A549 (cell line): ENCODE measurements at regions of chr16 and their contacts with region 1.

Region 1: DNA sequence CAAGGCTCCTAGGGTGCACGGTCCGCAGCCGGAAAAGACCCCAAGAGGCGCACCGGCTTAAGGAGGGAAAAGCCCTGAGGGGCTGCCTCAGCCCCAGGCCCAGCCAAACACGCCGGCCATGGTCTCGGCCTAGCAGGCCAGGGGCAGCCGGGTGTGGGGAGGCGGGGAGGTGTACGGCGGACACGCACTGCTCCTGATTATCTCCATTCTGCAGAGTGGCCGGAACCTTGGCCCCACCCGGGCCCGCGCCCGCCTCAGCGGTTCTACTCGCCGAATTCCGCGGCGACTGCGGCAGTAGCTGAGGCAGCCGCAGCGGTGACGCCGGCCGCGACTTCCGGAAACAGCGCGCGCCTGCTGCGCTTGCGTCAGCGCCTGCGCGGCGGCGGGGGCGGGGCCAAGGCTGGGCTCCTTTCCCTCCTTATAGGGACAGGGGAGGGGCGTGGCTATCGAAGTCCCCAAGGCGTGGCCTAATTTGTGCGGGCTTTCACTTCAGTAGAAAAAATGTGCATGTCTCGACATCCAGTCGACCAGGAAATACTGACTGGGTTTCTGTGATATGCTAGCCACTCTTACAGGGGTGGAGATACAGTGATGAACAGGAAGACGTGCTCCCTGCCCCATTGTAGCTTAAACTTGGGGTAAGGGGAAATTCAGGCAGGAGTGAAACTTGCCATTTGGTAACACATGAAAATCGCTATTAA is at the start of gene PARN:
- DNase-seq: peak; percentile 97 to 99
- ATAC-seq: peak; percentile 70 to 72
- H3K4me3 ChIP-seq: peak within 1 kb of the TSS; percentile 79
- H3K27ac ChIP-seq: peak within 1 kb of the TSS; percentile 90 to 97
- H3K4me1 ChIP-seq: peaks cover 35% of the 10 kb centered on the region
- CTCF ChIP-seq: no peak
- EP300 ChIP-seq: no peak
- POLR2A ChIP-seq: peak; percentile 80
- RAD21 ChIP-seq: no peak
- polyA plus RNA-seq, gene PARN: 58.6 and 86.7 TPM in 2 replicates

Region 2: DNA sequence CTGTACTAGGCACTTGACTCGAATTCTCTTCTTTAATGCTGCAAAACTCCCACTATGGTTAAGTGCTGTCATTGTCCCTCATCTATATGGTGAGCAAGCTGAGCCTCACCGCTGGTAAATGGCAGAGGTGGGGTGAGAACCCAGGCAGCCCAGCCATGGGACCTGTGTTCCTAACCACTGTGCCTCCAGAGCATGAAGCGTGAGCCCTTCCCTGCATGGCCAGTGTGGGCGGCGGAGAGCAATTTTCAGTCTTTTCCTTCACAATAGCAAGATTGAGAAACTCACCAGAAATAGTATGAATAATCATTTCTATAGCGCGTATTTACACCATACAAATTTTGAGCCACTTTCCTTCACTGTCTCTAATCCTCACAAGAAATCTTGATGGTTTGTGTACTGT is 11.9 kb after region 1 on chr16:
- CTCF ChIA-PET with region 1: interaction called, 4 read pairs
- POLR2A ChIA-PET with region 1: interaction called, 10 read pairs
- DNase-seq: peak in 1 of 2 experiments; percentile 29
- ATAC-seq: peak; percentile 68 to 71; a peak in 5 of 6 replicates
- H3K4me3 ChIP-seq: no peak overlapping the region
- H3K27ac ChIP-seq: no peak overlapping the region
- H3K4me1 ChIP-seq: peaks cover 18% of the 10 kb centered on the region; the same call in 2 of the 3 replicates
- CTCF ChIP-seq: no peak
- EP300 ChIP-seq: no peak
- POLR2A ChIP-seq: no peak
- RAD21 ChIP-seq: no peak

Region 3: GRCh38 chr16:14667347-14668266 is 37.5 kb after region 1 on chr16:
- CTCF ChIA-PET with region 1: no interaction called
- POLR2A ChIA-PET with region 1: no interaction called
- DNase-seq: no peak
- ATAC-seq: no peak
- H3K4me3 ChIP-seq: no peak overlapping the region
- H3K27ac ChIP-seq: no peak overlapping the region
- H3K4me1 ChIP-seq: peaks cover 5% of the 10 kb centered on the region; the same call in 1 of the 3 replicates
- CTCF ChIP-seq: no peak
- EP300 ChIP-seq: no peak
- POLR2A ChIP-seq: no peak
- RAD21 ChIP-seq: no peak